Heart right ventricle (tissue), 16 donors: ENCODE measurements at regions of chr3 and their contacts with region 1.

Region 1: GRCh38 chr3:31687020-31687802 is 154.5 kb downstream of the STT3B start:
- DNase-seq: no peak
- ATAC-seq: no peak
- H3K4me3 ChIP-seq: no peak overlapping the region
- H3K27ac ChIP-seq: no peak overlapping the region
- H3K4me1 ChIP-seq: peaks cover 0 to 12% (median 0%) of the 10 kb centered on the region in 9 donors
- H3K27me3 ChIP-seq: no peaks in the 10 kb centered on the region
- CTCF ChIP-seq: no peak

Region 2: GRCh38 chr3:31550452-31551251 is 136.6 kb before region 1 on chr3:
- intact Hi-C with region 1: loop called in 1 of 10 experiments (anchors 5 kb)
- DNase-seq: no peak
- ATAC-seq: peak in 5 of 8 donors; percentile 43 to 71 (median 59)
- H3K4me3 ChIP-seq: no peak overlapping the region
- H3K27ac ChIP-seq: no peak overlapping the region
- H3K4me1 ChIP-seq: peaks cover 10 to 66% (median 53%) of the 10 kb centered on the region in 9 donors
- H3K27me3 ChIP-seq: no peaks in the 10 kb centered on the region
- CTCF ChIP-seq: peak; percentile 30 to 78 (median 68)